ENCODE measurements at regions of chr2 and their contacts with region 1.

Region 1: GRCh38 chr2:74893332-74893731 is 59.4 kb downstream of the HK2 start:
- DNase-seq: peak; percentile 83
- ATAC-seq: peak; percentile 60
- H3K4me3 ChIP-seq: no peak overlapping the region
- H3K27ac ChIP-seq: peak overlapping the region; percentile 81
- H3K4me1 ChIP-seq: peaks cover 20% of the 10 kb centered on the region
- H3K27me3 ChIP-seq: no peaks in the 10 kb centered on the region
- CTCF ChIP-seq: no peak
- POLR2A ChIP-seq: no peak
- RAD21 ChIP-seq: no peak

Region 2: GRCh38 chr2:74715078-74715791 is 178.1 kb before region 1 on chr2:
- CTCF ChIA-PET with region 1: interaction called, 10 read pairs
- POLR2A ChIA-PET with region 1: no interaction called
- dilution Hi-C with region 1: no loop called
- in situ Hi-C with region 1: no loop called
- intact Hi-C with region 1: no loop called
- DNase-seq: peak; percentile 72
- ATAC-seq: peak; percentile 97
- H3K4me3 ChIP-seq: peak overlapping the region; percentile 44
- H3K27ac ChIP-seq: peak overlapping the region; percentile 55; the same call in 1 of the 2 replicates
- H3K4me1 ChIP-seq: 0 out of 2 replicates have a peak, but pooled peaks cover 2% of the 10 kb centered on the region
- H3K27me3 ChIP-seq: peaks cover 8% of the 10 kb centered on the region
- CTCF ChIP-seq: peak; percentile 93
- POLR2A ChIP-seq: no peak
- RAD21 ChIP-seq: peak; percentile 81

Region 3: DNA sequence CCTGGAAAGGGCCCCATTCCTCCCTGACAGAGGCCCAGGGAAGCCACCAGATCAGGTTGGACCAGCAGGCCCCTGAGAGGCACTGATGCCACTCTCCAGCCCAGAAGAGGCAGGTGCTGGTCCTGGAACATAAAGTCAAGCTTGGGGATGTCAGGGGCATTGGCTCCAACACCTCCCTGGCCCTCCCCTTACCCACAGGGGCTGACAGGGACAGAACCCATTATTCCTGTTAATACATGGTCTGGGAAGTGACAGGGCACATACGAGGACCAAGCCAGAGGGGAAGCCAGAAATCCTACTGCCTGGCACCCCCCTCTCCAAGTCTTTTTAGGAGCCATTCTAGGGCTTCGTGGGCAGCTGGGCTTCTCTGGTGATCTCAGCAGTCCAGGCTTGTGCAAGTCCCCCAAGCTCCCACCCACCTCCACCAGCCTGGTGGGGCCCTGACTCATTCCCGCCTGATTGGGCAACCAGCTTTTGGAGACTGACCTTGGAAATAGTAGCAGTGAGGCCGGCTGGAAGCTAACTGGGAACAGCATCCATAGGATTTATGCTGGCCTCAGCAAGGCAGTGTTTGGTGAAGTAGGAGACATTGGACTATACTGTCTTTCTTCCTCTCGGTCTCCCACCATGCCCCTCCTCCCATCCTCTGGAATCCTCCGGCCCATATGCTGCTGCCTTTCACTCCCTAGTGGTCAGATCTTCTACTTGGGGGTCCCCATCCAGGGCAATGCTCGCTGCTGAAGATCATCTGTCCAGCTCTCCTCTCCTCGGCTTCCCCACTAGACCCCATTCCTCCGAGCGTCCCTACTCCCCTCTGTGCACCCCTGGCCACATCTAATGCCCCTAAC is 145.8 kb before region 1 on chr2:
- CTCF ChIA-PET with region 1: no interaction called
- POLR2A ChIA-PET with region 1: no interaction called
- dilution Hi-C with region 1: no loop called
- in situ Hi-C with region 1: no loop called
- intact Hi-C with region 1: no loop called
- DNase-seq: peak; percentile 87
- ATAC-seq: peak; percentile 94
- H3K4me3 ChIP-seq: no peak overlapping the region
- H3K27ac ChIP-seq: peak overlapping the region; percentile 3; the same call in 1 of the 2 replicates
- H3K4me1 ChIP-seq: peaks cover 9% of the 10 kb centered on the region
- H3K27me3 ChIP-seq: no peaks in the 10 kb centered on the region
- CTCF ChIP-seq: no peak
- POLR2A ChIP-seq: no peak
- RAD21 ChIP-seq: no peak

Measured in IMR-90 (cell line).